AG04449 (cell line): ENCODE measurements at regions of chr4 and their contacts with region 1.

Region 1: DNA sequence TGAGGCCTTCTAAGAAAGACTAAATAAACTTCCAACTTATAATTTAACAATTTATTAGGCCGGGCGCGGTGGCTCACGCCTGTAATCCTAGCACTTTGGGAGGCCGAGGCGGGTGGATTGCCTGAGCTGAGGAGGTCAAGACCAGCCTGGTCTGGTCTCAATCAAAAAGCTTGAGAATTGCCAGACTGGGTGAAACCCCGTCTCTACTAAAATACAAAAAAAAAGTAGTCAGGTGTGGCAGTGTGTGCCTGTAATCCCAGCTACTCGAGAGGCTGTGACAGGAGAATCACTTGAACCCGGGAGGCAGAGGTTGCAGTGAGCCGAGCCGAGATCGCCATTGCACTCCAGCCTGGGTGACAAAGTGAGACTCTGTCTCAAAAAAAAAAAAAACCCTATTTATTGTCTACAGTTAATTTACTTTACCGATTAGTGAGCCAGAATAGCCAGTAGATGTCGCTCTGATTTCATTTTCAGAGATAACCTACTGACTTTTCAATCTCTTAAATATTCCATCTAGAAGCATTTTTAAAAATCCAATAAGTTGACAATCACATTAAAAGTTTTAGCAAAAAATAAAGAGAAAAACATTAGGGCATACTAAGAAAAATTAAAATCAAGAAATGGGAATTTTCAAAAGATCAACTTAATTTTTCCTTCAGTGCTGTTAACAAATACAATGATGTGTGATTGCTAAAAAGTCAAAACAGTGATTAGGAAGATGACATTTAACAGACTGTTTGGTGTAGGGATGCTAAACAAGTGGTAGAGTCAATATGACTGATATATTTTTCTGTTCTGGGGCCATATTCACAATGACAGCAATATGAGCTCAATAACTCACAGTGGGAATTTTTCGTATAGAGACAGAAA is 4.3 kb upstream of the SHROOM3 start:
- DNase-seq: peak; percentile 14
- H3K4me3 ChIP-seq: no peak overlapping the region
- CTCF ChIP-seq: peak; percentile 36

Region 2: GRCh38 chr4:76441881-76442280 is 11.1 kb after region 1 on chr4:
- CTCF ChIA-PET with region 1: interaction called, 27 read pairs
- POLR2A ChIA-PET with region 1: interaction called, 3 read pairs
- DNase-seq: no peak
- H3K4me3 ChIP-seq: no peak overlapping the region
- CTCF ChIP-seq: no peak

Region 3: GRCh38 chr4:76447393-76447851 is 16.7 kb after region 1 on chr4:
- CTCF ChIA-PET with region 1: interaction called, 27 read pairs
- POLR2A ChIA-PET with region 1: interaction called, 3 read pairs
- DNase-seq: peak; percentile 24
- H3K4me3 ChIP-seq: no peak overlapping the region
- CTCF ChIP-seq: no peak

Region 4: GRCh38 chr4:76492055-76492454 is 61.3 kb after region 1 on chr4:
- CTCF ChIA-PET with region 1: interaction called, 586 read pairs
- POLR2A ChIA-PET with region 1: no interaction called
- DNase-seq: no peak
- H3K4me3 ChIP-seq: no peak overlapping the region
- CTCF ChIP-seq: no peak

Region 5: DNA sequence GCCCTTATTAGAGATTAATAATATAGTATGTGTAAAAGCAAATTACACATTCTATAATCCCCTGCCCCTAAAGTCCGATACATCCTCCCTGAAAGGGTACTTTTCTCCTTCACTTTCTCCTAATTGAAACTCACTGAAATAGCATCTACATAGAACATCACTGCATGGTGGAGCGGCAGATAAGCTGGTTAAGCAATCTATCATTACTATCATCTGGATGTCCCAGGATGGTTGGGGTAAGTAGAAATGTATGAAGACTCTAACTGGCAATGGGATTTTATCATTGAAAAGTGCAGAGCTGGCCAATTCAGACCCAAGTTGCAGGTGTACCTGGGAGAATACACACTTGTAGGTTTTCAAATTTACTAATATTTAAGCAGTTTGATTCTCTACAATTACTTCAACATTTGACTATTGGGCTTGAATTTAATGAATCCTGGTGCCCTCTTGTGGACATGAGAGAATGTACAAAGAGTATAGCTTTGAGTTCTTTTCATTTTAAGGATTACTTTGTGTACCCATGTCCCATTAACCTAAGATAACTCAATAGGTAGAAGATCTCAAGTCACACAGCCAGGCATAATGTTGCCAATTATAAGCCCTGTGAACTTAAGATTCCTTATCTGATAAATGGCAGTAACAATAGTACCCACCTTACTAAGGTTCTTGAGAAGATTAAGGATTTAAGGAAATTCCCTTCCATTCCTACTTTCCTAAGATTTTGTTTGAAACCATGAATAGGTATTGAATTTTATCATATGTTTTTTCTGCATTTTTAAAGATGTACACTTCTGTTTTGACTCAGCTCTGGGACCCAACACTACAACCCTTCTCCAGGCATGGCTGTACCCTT is 74.1 kb after region 1 on chr4:
- CTCF ChIA-PET with region 1: interaction called, 586 read pairs
- POLR2A ChIA-PET with region 1: no interaction called
- DNase-seq: no peak
- H3K4me3 ChIP-seq: no peak overlapping the region
- CTCF ChIP-seq: peak; percentile 44

Region 6: DNA sequence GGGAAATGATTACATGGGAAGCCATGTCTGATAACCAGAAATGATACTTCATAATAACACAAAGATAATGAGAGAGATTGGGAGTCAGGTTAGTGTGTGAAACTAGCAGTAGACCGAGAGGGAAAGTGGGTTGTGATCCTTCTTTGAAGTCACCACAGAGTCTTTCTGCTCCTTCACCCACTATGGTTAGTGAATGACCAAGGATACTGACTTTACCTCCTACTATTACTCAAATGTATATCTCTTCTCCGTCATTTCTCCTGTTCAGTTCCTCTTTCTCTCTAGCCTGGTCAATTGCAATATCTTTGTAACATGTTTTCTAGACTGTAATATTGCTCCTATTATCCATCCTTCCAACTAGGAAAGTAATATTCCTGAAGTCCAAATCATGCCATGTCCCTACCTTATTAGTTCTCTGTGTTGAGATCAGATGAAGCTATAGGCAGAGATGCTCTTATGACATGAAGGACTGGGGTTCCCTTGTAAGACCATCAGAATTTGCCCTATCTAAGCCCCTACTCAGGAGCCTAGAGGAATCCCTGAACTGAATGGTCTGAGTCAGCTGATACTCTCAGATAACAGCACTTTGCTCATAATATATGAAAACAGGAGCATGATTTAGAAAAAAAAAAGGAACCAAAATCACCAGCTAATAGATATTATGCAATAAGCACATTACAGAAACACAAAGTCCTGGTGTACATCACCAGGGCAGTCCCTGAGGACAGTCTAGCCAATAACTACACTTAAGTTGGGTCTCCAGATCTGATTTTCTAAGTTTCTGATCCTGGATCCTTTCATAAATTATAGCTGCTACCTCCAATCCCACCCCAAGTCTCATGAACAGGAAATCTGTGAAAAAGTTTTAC is 85.5 kb after region 1 on chr4:
- CTCF ChIA-PET with region 1: interaction called, 66 read pairs
- POLR2A ChIA-PET with region 1: no interaction called
- DNase-seq: no peak
- H3K4me3 ChIP-seq: no peak overlapping the region
- CTCF ChIP-seq: no peak